Activated CD4-positive, alpha-beta memory T cell treated with anti-CD3 and anti-CD28 coated beads for 36 hours (primary cell): ENCODE measurements at regions of chr7 and their contacts with region 1.

Region 1: GRCh38 chr7:111138196-111138569 is 47.3 kb downstream of the LRRN3 start:
- DNase-seq: peak; percentile 82
- H3K4me3 Mint-ChIP-seq: peak overlapping the region; percentile 43
- H3K27ac Mint-ChIP-seq: peak overlapping the region; percentile 92
- H3K4me1 Mint-ChIP-seq: peaks cover 29% of the 10 kb centered on the region
- H3K27me3 Mint-ChIP-seq: no peaks in the 10 kb centered on the region

Region 2: GRCh38 chr7:110881721-110882120 is 256.5 kb before region 1 on chr7:
- CTCF ChIA-PET with region 1: no interaction called
- POLR2A ChIA-PET with region 1: no interaction called
- intact Hi-C with region 1: no loop called
- DNase-seq: no peak
- H3K4me3 Mint-ChIP-seq: no peak overlapping the region
- H3K27ac Mint-ChIP-seq: no peak overlapping the region
- H3K4me1 Mint-ChIP-seq: no peaks in the 10 kb centered on the region
- H3K27me3 Mint-ChIP-seq: no peaks in the 10 kb centered on the region

Region 3: DNA sequence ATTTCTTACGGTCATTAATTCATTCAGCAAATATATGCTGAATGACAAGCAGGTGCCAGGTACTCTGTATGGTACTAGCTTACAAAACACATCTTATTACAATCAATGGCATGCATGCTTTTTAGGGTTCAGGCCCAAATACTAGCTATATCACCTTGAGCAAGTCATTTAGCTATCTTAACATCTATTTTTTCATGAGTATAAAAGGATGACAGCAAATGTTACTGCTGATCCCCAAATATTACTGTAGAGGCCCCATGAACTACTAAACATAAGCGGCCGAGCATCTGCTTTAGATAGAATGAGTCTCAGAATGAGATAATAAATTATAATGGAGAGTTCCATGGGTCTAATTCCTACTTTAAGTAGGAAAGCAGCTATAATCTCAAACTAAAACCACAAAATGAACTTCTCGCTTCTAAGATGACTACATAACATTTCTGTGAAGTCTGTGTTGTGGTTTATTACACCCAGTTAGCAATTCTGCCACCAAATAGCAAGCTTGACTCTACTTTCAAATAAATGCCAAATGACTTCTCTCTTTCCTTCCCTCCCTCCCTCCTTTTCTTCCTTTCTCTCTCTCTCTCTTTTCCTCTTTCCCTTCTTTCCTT is 161.0 kb before region 1 on chr7:
- CTCF ChIA-PET with region 1: no interaction called
- POLR2A ChIA-PET with region 1: no interaction called
- intact Hi-C with region 1: no loop called
- DNase-seq: no peak
- H3K4me3 Mint-ChIP-seq: peak overlapping the region; percentile 28
- H3K27ac Mint-ChIP-seq: peak overlapping the region; percentile 59
- H3K4me1 Mint-ChIP-seq: peaks cover 24% of the 10 kb centered on the region
- H3K27me3 Mint-ChIP-seq: no peaks in the 10 kb centered on the region

Region 4: DNA sequence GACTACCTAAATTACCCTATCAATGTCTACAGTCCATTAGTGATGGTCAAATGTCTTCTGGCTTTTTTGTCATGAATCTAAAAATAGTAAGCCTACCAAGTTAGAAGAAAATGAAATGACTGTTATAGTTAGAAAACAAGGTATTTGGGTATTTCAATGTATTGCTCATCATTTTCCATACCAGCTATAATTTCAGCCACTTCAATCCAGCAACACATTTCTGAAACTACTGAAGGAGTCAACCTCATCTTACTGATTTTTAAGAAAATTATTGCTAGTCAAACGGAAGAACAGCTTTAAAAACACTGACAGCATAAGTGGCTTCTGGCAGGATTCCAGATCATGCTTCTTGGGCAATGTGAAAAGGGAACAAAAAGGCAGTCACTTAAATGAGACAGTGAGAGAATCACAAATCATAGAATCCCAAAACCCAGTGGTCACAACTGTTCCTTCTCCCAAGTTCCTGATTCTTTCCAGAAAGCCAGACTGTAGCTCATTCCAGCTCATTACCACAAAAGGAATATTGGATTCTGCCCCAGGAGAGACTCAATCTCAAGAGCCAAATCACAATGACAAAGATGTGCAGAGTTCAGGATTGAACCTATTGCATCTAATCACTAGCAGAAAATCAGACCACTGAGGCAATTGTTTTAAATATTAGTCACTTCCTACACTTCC is 108.5 kb before region 1 on chr7:
- CTCF ChIA-PET with region 1: no interaction called
- POLR2A ChIA-PET with region 1: interaction called, 3 read pairs
- intact Hi-C with region 1: loop called (anchors 1 kb)
- DNase-seq: peak; percentile 53
- H3K4me3 Mint-ChIP-seq: peak overlapping the region; percentile 24
- H3K27ac Mint-ChIP-seq: peak overlapping the region; percentile 82
- H3K4me1 Mint-ChIP-seq: peaks cover 53% of the 10 kb centered on the region
- H3K27me3 Mint-ChIP-seq: no peaks in the 10 kb centered on the region

Region 5: GRCh38 chr7:111053035-111053434 is 85.1 kb before region 1 on chr7:
- CTCF ChIA-PET with region 1: no interaction called
- POLR2A ChIA-PET with region 1: no interaction called
- intact Hi-C with region 1: no loop called
- DNase-seq: no peak
- H3K4me3 Mint-ChIP-seq: no peak overlapping the region
- H3K27ac Mint-ChIP-seq: no peak overlapping the region
- H3K4me1 Mint-ChIP-seq: peaks cover 9% of the 10 kb centered on the region
- H3K27me3 Mint-ChIP-seq: no peaks in the 10 kb centered on the region

Region 6: DNA sequence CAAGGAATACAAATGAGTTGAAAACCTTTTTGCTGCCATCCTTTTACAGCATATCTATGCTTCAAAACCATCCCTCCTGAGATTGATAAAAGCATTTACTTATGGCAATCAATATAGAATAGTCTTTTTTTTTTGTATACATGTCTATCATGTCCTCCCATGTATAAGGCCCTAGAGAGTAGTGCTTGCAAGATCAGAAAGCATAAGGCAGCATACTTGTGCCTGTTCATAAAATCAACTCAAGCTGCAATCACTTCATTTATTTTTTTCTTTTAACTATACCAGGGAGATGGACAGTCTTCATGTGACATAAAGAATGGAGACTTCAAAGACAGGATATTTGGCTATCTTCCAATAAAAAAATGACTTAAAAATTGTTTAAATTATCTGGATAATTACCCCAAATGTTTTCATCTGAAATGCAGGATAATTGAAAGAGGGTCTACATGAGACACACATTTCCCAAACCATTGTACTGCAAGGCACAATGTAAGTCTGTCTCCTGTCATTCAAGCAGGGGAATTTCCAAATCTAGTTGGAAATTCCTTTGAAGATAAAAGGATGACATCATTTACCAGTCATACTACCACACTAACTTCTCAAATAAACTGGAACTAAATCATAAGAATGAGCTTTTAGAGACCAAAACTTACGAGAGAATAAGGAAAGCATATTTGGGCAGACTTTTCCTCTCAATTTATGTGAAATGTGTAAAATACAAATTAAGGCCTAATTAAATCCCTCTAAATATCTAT is 24.7 kb before region 1 on chr7:
- CTCF ChIA-PET with region 1: no interaction called
- POLR2A ChIA-PET with region 1: interaction called, 3 read pairs
- intact Hi-C with region 1: loop called (anchors 2 kb)
- DNase-seq: no peak
- H3K4me3 Mint-ChIP-seq: no peak overlapping the region
- H3K27ac Mint-ChIP-seq: peak overlapping the region; percentile 56
- H3K4me1 Mint-ChIP-seq: peaks cover 16% of the 10 kb centered on the region
- H3K27me3 Mint-ChIP-seq: no peaks in the 10 kb centered on the region

Region 7: DNA sequence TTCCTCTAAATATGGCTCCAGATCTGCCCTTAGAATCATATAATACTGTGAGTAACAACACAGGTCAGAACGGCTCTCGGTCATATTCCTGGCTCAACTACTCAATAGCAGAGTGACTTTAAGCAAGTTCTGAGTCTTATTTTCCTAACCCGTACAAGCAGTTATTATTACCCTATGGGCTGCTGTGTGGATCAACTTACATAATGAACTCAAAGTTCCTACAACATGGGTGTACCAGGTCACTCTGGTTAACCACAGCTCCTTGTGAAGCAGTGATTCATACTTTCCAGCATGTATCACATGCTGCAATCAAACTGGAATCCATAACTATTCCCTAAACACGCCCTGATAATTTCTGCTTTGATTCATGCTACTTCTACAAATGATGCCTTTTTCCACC is 60.1 kb after region 1 on chr7:
- CTCF ChIA-PET with region 1: no interaction called
- POLR2A ChIA-PET with region 1: no interaction called
- intact Hi-C with region 1: loop called (anchors 1 kb)
- DNase-seq: no peak
- H3K4me3 Mint-ChIP-seq: no peak overlapping the region
- H3K27ac Mint-ChIP-seq: no peak overlapping the region
- H3K4me1 Mint-ChIP-seq: peaks cover 9% of the 10 kb centered on the region
- H3K27me3 Mint-ChIP-seq: no peaks in the 10 kb centered on the region